ENCODE measurements at regions of chr11 and their contacts with region 1.

Region 1: GRCh38 chr11:123640677-123641494 is 13.5 kb downstream of the SCN3B start:
- DNase-seq: peak; percentile 48
- H3K27ac ChIP-seq: no peak overlapping the region
- CTCF ChIP-seq: peak; percentile 62

Region 2: GRCh38 chr11:123570939-123571580 is 69.8 kb before region 1 on chr11:
- CTCF ChIA-PET with region 1: no interaction called
- POLR2A ChIA-PET with region 1: no interaction called
- DNase-seq: no peak
- H3K27ac ChIP-seq: no peak overlapping the region
- CTCF ChIP-seq: no peak

Region 3: DNA sequence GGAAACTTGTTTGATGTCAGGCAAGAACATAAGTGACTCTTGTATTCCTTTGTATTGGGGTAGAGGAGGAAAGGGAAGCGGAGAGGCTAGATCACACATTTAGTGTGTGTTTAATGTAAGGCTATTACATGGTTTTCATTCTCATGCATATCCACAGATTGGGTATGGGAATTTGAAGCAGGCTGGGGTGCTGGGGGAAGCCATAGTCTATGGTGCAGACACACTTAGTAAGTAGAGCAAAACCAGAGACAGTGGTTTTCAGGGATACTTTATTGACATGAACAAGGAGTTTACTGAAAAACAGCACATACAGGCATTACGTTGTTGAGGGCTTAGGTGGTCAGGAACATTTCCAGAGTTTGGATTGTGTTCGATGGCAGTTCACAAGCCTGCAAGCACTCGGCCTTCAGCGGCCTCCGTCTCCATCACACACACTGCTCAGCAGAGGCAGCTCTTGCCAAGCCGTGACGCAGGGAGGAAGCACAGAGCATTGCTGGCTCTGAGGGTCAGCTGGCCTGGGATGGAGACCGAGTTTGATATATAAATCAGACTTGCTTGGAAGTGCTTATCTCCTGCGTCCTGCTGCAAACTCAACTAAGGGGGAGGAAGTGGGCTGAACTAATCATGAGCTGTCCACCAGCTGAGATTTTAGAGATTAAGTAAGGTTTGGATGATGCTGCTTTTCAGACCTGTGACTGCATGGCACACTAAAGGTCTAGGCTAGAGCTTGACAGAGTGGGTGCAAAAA is 11.8 kb before region 1 on chr11:
- CTCF ChIA-PET with region 1: no interaction called
- POLR2A ChIA-PET with region 1: no interaction called
- DNase-seq: no peak
- H3K27ac ChIP-seq: no peak overlapping the region
- CTCF ChIP-seq: no peak

Region 4: DNA sequence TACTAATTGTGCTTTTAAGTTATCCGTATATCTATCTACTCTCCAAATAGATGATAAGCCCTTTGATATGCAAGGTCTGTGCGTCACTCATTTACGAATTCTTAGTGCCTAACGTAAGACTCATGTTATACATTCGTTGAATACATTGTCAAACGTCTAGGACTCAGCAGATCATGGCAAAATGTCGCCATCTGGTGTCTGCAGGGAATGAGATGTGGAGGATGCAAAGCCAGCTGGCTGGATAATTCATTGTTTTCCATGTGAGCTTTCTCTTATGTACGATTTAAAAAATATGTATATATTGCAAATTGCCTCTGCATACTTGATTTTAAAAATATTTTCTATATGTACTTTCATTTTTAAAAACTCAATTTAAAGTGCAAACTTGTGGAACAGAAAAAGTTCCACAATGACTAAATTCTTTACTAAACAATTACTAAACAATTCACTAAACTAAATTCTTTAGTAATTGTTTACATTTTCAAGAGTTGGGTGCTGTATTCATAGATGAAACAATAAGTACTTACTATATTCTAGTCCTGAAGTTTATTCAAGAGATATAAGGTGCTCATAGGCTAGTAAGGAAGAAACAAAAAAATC is 66.8 kb after region 1 on chr11:
- CTCF ChIA-PET with region 1: interaction called, 40 read pairs
- POLR2A ChIA-PET with region 1: no interaction called
- DNase-seq: peak; percentile 72
- H3K27ac ChIP-seq: no peak overlapping the region
- CTCF ChIP-seq: peak; percentile 73